Activated CD4-positive, alpha-beta memory T cell treated with anti-CD3 and anti-CD28 coated beads for 36 hours (primary cell): ENCODE measurements at regions of chr10 and their contacts with region 1.

Region 1: DNA sequence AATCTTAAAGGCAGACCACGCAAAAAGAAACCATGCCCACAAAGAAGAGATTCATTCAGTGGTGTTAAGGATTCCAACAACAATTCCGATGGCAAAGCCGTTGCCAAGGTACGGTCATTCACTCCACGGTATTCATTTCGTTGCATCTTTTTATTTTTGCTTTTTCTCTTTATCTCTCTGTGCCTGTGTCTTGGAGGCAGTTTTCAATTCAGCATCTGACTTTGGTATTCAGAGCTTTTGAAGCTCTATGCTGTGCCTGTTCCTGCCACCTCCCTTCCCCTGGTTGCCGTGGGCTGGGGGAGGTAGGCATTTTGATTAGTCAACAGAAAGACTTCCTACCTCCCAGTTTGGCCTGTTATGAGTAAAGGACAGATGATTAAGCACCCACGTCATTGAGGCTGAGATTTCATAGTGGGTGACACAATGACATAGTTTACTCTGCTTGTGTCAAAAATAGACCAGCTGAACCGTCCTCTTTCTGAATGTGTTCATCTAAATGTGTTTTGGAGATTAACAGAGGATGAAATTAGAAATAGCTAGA is 149.5 kb downstream of the ARID5B start:
- DNase-seq: peak; percentile 91
- H3K4me3 Mint-ChIP-seq: peak overlapping the region; percentile 94
- H3K27ac Mint-ChIP-seq: peak overlapping the region; percentile 96
- H3K4me1 Mint-ChIP-seq: peaks cover 71% of the 10 kb centered on the region
- H3K27me3 Mint-ChIP-seq: no peaks in the 10 kb centered on the region

Region 2: DNA sequence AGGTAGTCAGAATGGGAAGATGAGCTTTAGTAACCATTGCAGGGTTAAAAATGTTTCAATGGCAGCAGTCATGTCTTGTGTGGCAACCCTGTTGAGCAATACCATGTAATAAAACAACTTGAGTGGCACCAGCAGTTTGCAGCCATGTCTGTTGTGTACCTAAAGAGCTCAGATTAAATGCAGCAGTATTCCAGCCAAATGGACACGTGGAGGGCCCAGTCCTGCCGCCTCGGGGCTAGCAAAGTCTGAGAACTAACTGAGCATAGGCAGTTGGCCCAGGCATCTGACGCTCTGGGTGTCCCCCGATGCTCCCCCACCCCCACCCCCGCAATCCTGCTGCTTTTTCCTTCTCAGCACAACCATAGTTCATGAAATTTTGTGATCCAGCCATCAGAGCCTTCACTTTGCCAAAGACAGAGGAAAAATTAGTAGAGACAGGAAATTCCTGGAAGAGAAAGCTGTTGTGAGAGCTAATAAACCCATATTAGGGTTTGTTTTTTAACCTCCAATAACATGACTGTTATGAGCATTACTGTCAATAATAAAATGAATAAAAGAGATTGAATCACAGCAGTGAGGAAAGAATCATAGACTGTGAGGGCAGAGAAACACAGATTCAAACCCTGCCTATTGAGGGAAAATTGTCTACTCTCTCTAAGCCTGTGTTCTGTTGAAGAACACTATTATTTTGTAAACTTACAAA is 886.4 kb before region 1 on chr10:
- CTCF ChIA-PET with region 1: no interaction called
- POLR2A ChIA-PET with region 1: no interaction called
- intact Hi-C with region 1: no loop called
- DNase-seq: no peak
- H3K4me3 Mint-ChIP-seq: no peak overlapping the region
- H3K27ac Mint-ChIP-seq: no peak overlapping the region
- H3K4me1 Mint-ChIP-seq: no peaks in the 10 kb centered on the region
- H3K27me3 Mint-ChIP-seq: no peaks in the 10 kb centered on the region

Region 3: DNA sequence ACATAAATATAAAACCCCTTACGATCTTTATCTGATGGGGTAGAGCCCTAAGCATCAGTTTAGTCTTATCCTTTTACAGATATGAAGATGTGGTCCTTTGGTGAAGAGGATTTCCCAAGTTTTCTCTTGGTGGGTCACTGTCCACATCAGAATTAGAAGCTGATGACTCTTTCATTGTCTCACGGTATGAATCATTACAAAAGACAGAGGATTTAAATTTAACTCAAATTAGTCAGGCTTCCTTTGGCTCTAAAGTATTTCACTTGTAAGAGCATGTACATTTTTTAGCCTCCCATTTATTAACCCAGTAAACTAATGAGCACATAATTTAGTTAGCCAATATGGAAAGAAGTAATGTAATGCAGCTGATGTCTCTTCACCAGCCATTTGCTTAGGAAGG is 547.9 kb before region 1 on chr10:
- CTCF ChIA-PET with region 1: no interaction called
- POLR2A ChIA-PET with region 1: no interaction called
- intact Hi-C with region 1: no loop called
- DNase-seq: no peak
- H3K4me3 Mint-ChIP-seq: no peak overlapping the region
- H3K27ac Mint-ChIP-seq: no peak overlapping the region
- H3K4me1 Mint-ChIP-seq: no peaks in the 10 kb centered on the region
- H3K27me3 Mint-ChIP-seq: peaks cover 5% of the 10 kb centered on the region

Region 4: GRCh38 chr10:61786728-61787127 is 264.2 kb before region 1 on chr10:
- CTCF ChIA-PET with region 1: no interaction called
- POLR2A ChIA-PET with region 1: no interaction called
- intact Hi-C with region 1: loop called (anchors 5 kb)
- DNase-seq: peak; percentile 49
- H3K4me3 Mint-ChIP-seq: no peak overlapping the region
- H3K27ac Mint-ChIP-seq: peak overlapping the region; percentile 19
- H3K4me1 Mint-ChIP-seq: peaks cover 49% of the 10 kb centered on the region
- H3K27me3 Mint-ChIP-seq: no peaks in the 10 kb centered on the region

Region 5: GRCh38 chr10:61937631-61938351 is 113.2 kb before region 1 on chr10:
- CTCF ChIA-PET with region 1: interaction called, 6 read pairs
- POLR2A ChIA-PET with region 1: interaction called, 164 read pairs
- intact Hi-C with region 1: no loop called
- DNase-seq: peak; percentile 30
- H3K4me3 Mint-ChIP-seq: peak overlapping the region; percentile 74
- H3K27ac Mint-ChIP-seq: peak overlapping the region; percentile 92
- H3K4me1 Mint-ChIP-seq: peaks cover 88% of the 10 kb centered on the region
- H3K27me3 Mint-ChIP-seq: no peaks in the 10 kb centered on the region

Region 6: DNA sequence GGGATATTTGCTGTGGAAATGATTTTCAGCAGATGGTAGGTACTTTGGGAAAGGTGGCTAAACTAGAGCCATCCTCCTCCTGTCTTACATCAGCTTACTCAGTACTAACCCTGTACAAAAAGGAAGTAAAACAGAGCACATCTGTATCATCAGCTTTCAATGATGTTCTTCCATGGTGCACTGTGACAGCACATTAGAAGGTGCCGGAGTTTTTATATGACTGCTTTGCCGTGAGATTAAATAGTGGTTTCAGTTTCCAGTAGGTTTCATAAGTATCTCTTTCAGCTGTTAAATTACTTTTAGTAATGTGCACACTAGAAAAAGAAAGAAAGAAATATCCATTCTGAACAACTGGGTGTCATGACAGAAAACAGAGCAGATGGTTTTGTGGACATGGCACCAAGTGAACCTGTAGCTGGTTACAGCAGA is 63.0 kb before region 1 on chr10:
- CTCF ChIA-PET with region 1: interaction called, 19 read pairs
- POLR2A ChIA-PET with region 1: interaction called, 136 read pairs
- intact Hi-C with region 1: loop called (anchors 1 kb)
- DNase-seq: peak; percentile 50
- H3K4me3 Mint-ChIP-seq: peak overlapping the region; percentile 59
- H3K27ac Mint-ChIP-seq: peak overlapping the region; percentile 95
- H3K4me1 Mint-ChIP-seq: peaks cover 91% of the 10 kb centered on the region
- H3K27me3 Mint-ChIP-seq: no peaks in the 10 kb centered on the region

Region 7: GRCh38 chr10:62038609-62039190 is 12.3 kb before region 1 on chr10:
- CTCF ChIA-PET with region 1: interaction called, 51 read pairs
- POLR2A ChIA-PET with region 1: interaction called, 87 read pairs
- intact Hi-C with region 1: no loop called
- DNase-seq: peak; percentile 85
- H3K4me3 Mint-ChIP-seq: peak overlapping the region; percentile 47
- H3K27ac Mint-ChIP-seq: peak overlapping the region; percentile 84
- H3K4me1 Mint-ChIP-seq: peaks cover 81% of the 10 kb centered on the region
- H3K27me3 Mint-ChIP-seq: no peaks in the 10 kb centered on the region

Region 8: GRCh38 chr10:62244780-62245467 is 194.0 kb after region 1 on chr10:
- CTCF ChIA-PET with region 1: interaction called, 50 read pairs
- POLR2A ChIA-PET with region 1: interaction called, 12 read pairs
- intact Hi-C with region 1: no loop called
- DNase-seq: peak; percentile 62
- H3K4me3 Mint-ChIP-seq: no peak overlapping the region
- H3K27ac Mint-ChIP-seq: peak overlapping the region; percentile 69
- H3K4me1 Mint-ChIP-seq: peaks cover 37% of the 10 kb centered on the region
- H3K27me3 Mint-ChIP-seq: no peaks in the 10 kb centered on the region

Region 9: GRCh38 chr10:62373995-62374861 is 323.3 kb after region 1 on chr10 and contains the start of gene ZNF365:
- CTCF ChIA-PET with region 1: no interaction called
- POLR2A ChIA-PET with region 1: no interaction called
- intact Hi-C with region 1: no loop called
- DNase-seq: peak; percentile 69
- H3K4me3 Mint-ChIP-seq: peak within 1 kb of the TSS; percentile 75
- H3K27ac Mint-ChIP-seq: peak within 1 kb of the TSS; percentile 49
- H3K4me1 Mint-ChIP-seq: peaks cover 15% of the 10 kb centered on the region
- H3K27me3 Mint-ChIP-seq: peaks cover 15% of the 10 kb centered on the region
- total RNA-seq, gene ZNF365: 1.2 to 1.4 TPM

Region 10: GRCh38 chr10:62690703-62691102 is 639.7 kb after region 1 on chr10:
- CTCF ChIA-PET with region 1: no interaction called
- POLR2A ChIA-PET with region 1: no interaction called
- intact Hi-C with region 1: no loop called
- DNase-seq: no peak
- H3K4me3 Mint-ChIP-seq: no peak overlapping the region
- H3K27ac Mint-ChIP-seq: no peak overlapping the region
- H3K4me1 Mint-ChIP-seq: peaks cover 58% of the 10 kb centered on the region
- H3K27me3 Mint-ChIP-seq: no peaks in the 10 kb centered on the region

Region 11: GRCh38 chr10:62732841-62733653 is 682.1 kb after region 1 on chr10:
- CTCF ChIA-PET with region 1: no interaction called
- POLR2A ChIA-PET with region 1: no interaction called
- intact Hi-C with region 1: loop called (anchors 10 kb)
- DNase-seq: peak; percentile 71
- H3K4me3 Mint-ChIP-seq: no peak overlapping the region
- H3K27ac Mint-ChIP-seq: no peak overlapping the region
- H3K4me1 Mint-ChIP-seq: peaks cover 19% of the 10 kb centered on the region
- H3K27me3 Mint-ChIP-seq: peaks cover 3% of the 10 kb centered on the region